Heart left ventricle (tissue), 16 donors: ENCODE measurements at regions of chr12 and their contacts with region 1.

Region 1: DNA sequence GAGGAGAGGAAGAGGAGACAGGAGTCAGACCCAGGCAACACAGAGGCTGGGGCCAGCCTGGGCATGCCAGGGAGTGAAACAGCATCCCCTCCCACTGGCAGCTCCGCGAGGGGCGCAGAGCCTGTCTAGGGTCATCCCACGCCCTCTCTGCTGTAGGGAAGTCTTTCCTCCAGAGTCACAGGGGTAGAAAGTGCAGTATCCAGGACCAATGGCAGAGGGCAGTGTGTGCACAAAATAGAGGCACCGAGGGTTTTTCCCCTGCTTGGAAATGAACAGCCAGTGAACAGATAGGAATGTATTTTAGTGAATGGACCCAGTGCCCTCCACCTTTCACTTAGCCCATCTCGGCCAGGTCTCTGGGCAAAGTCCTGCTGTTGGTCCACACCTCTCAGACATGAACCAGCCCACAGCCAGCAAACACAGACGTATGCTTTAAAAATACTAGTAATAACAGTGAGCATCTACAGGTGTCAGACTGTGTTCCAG is 9.4 kb upstream of the KRT74 start:
- DNase-seq: peak in 3 of 5 donors; percentile 31 to 52 (median 41)
- ATAC-seq: peak; percentile 56 to 84 (median 74)
- H3K4me3 ChIP-seq: no peak overlapping the region
- H3K27ac ChIP-seq: no peak overlapping the region
- H3K4me1 ChIP-seq: no peaks in the 10 kb centered on the region
- H3K27me3 ChIP-seq: peaks cover 0 to 13% (median 0%) of the 10 kb centered on the region in 9 donors
- CTCF ChIP-seq: peak; percentile 45 to 72 (median 62)
- POLR2A ChIP-seq: no peak

Region 2: DNA sequence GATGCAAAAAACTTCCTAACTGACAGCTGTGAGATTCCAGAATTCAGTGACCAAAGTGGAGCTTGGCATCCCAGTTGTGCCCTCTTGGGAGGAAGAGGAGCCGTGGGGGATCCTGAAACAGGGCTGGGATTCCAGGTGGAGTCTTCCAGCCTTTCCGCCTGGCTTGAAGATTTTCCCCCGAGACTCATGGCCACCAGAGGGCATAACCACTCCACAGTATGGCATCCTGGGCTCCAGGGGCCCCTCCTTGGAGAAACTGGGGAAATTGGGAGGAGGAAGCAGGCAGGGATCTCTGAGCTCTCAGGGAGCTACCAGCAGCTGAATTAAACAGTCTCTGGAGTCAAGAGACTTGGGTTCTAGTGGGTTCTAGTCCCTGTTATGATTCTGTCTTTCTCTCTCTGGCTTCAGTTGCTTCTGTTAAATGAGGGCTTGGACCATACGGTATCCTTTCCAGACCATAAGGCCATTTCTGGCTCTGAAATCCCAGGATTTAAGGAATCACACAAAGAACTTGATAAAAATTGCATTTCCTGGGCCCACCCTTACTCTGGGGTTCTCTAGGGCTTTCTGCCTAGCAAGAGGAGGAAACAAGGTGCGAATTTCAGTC is 578.9 kb before region 1 on chr12:
- intact Hi-C with region 1: no loop called
- DNase-seq: peak in 4 of 5 donors; percentile 59 to 64 (median 60)
- ATAC-seq: peak; percentile 16 to 40 (median 30)
- H3K4me3 ChIP-seq: no peak overlapping the region
- H3K27ac ChIP-seq: no peak overlapping the region
- H3K4me1 ChIP-seq: peaks cover 0 to 47% (median 17%) of the 10 kb centered on the region in 12 donors
- H3K27me3 ChIP-seq: peaks cover 0 to 20% (median 4%) of the 10 kb centered on the region in 9 donors
- CTCF ChIP-seq: peak; percentile 48 to 77 (median 70)
- POLR2A ChIP-seq: no peak

Region 3: GRCh38 chr12:52372216-52373154 is 210.5 kb before region 1 on chr12:
- intact Hi-C with region 1: loop called in 7 of 10 experiments (anchors 5 to 10 kb)
- DNase-seq: peak; percentile 70 to 84 (median 79)
- ATAC-seq: peak; percentile 66 to 90 (median 82)
- H3K4me3 ChIP-seq: no peak overlapping the region
- H3K27ac ChIP-seq: no peak overlapping the region
- H3K4me1 ChIP-seq: peaks cover 0 to 10% (median 0%) of the 10 kb centered on the region in 12 donors
- H3K27me3 ChIP-seq: peaks cover 0 to 12% (median 0%) of the 10 kb centered on the region in 9 donors
- CTCF ChIP-seq: peak; percentile 60 to 84 (median 74)
- POLR2A ChIP-seq: no peak

Region 4: GRCh38 chr12:52380271-52380694 is 202.7 kb before region 1 on chr12:
- intact Hi-C with region 1: loop called in 5 of 10 experiments (anchors 5 to 10 kb)
- DNase-seq: peak in 1 of 5 donors; percentile 44
- ATAC-seq: peak in 3 of 4 donors; percentile 23 to 51 (median 26)
- H3K4me3 ChIP-seq: no peak overlapping the region
- H3K27ac ChIP-seq: no peak overlapping the region
- H3K4me1 ChIP-seq: no peaks in the 10 kb centered on the region
- H3K27me3 ChIP-seq: peaks cover 0 to 20% (median 0%) of the 10 kb centered on the region in 9 donors
- CTCF ChIP-seq: peak; percentile 7 to 57 (median 32)
- POLR2A ChIP-seq: no peak

Region 5: GRCh38 chr12:52865090-52865944 is 282.3 kb after region 1 on chr12:
- intact Hi-C with region 1: loop called (anchors 2 to 5 kb)
- DNase-seq: peak; percentile 43 to 77 (median 61)
- ATAC-seq: peak in 3 of 4 donors; percentile 59 to 75 (median 62)
- H3K4me3 ChIP-seq: no peak overlapping the region
- H3K27ac ChIP-seq: no peak overlapping the region
- H3K4me1 ChIP-seq: peaks cover 0 to 5% (median 0%) of the 10 kb centered on the region in 12 donors
- H3K27me3 ChIP-seq: no peaks in the 10 kb centered on the region
- CTCF ChIP-seq: peak; percentile 56 to 80 (median 73)
- POLR2A ChIP-seq: no peak

Region 6: DNA sequence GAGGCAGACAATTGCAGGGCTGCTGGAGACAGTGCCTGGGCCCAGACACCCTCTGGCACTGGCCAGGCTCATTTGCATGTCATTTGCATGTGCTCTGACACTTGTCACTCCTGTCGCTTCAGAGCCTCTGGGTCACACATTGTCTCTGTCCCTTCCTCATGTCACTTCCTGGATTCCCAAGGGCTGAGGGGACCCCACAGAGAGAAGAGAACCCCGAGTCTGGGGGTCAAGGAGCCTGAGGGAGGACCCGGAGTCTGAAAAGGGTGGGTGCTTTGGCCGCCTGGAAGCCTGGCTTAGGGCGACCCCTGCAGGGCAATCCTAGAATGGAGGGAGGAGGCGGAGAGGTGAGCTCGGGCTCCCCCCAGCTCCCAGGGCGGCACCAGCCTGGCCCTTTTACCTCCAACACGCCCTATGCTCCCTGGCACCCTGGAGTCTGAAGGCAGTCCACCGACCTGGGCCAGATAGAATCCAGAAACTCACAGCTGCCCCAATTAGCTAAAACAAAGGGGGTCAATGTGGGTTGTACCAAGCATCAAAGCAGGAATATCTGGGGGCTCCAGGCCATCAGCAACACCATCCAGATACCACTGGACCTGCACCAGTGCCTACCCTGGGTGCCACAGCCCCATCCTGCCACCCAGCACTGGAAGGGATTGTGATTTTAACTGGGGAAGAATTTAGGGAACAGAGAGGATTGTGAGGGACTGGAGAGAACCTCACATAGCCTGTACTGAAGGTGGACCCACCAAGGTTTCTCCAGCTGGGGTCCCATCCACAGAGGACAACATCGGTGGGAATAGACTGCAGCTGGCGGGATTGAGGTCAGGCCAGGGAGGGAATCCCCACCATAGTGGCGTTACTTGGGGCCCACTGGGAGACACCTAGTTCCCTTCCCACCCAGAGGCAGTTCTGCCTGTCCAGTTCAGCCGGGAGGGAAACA is 287.6 kb after region 1 on chr12:
- intact Hi-C with region 1: loop called (anchors 2 to 5 kb)
- DNase-seq: peak; percentile 24 to 77 (median 52)
- ATAC-seq: peak in 3 of 4 donors; percentile 12 to 38 (median 38)
- H3K4me3 ChIP-seq: no peak overlapping the region
- H3K27ac ChIP-seq: peak overlapping the region in 5 of 12 donors; percentile 13 to 55 (median 36)
- H3K4me1 ChIP-seq: peaks cover 0 to 39% (median 10%) of the 10 kb centered on the region in 12 donors
- H3K27me3 ChIP-seq: no peaks in the 10 kb centered on the region
- CTCF ChIP-seq: peak; percentile 47 to 73 (median 64)
- POLR2A ChIP-seq: no peak

Region 7: GRCh38 chr12:52879394-52880351 is 296.7 kb after region 1 on chr12:
- intact Hi-C with region 1: loop called in 5 of 10 experiments (anchors 1 to 5 kb)
- DNase-seq: peak; percentile 76 to 87 (median 82)
- ATAC-seq: peak; percentile 70 to 92 (median 89)
- H3K4me3 ChIP-seq: peak overlapping the region in 9 of 12 donors; percentile 11 to 46 (median 33)
- H3K27ac ChIP-seq: peak overlapping the region in 1 of 12 donors; percentile 42
- H3K4me1 ChIP-seq: peaks cover 0 to 18% (median 8%) of the 10 kb centered on the region in 12 donors
- H3K27me3 ChIP-seq: peaks cover 0 to 17% (median 0%) of the 10 kb centered on the region in 9 donors
- CTCF ChIP-seq: peak; percentile 55 to 77 (median 66)
- POLR2A ChIP-seq: no peak

Region 8: GRCh38 chr12:52980693-52981423 is 397.8 kb after region 1 on chr12:
- intact Hi-C with region 1: loop called in 6 of 10 experiments (anchors 5 to 10 kb)
- DNase-seq: peak; percentile 85 to 92 (median 88)
- ATAC-seq: peak; percentile 71 to 96 (median 95)
- H3K4me3 ChIP-seq: no peak overlapping the region
- H3K27ac ChIP-seq: no peak overlapping the region
- H3K4me1 ChIP-seq: peaks cover 0 to 3% (median 0%) of the 10 kb centered on the region in 12 donors
- H3K27me3 ChIP-seq: peaks cover 0 to 20% (median 0%) of the 10 kb centered on the region in 9 donors
- CTCF ChIP-seq: peak; percentile 88 to 99 (median 96)
- POLR2A ChIP-seq: no peak